Activated CD8-positive, alpha-beta T cell treated with anti-CD3 and anti-CD28 coated beads, Interleukin-2, amount 10 ng/mL, durations not matched to agents 7 days and 5 days (primary cell): ENCODE measurements at regions of chr15 and their contacts with region 1.

Region 1: GRCh38 chr15:90886041-90886614 is 1.8 kb downstream of the FES start:
- DNase-seq: peak; percentile 86
- ATAC-seq: peak; percentile 76
- H3K4me3 Mint-ChIP-seq: peak overlapping the region; percentile 52
- H3K27ac Mint-ChIP-seq: peak overlapping the region; percentile 79
- H3K4me1 Mint-ChIP-seq: peaks cover 42% of the 10 kb centered on the region
- H3K27me3 Mint-ChIP-seq: no peaks in the 10 kb centered on the region

Region 2: DNA sequence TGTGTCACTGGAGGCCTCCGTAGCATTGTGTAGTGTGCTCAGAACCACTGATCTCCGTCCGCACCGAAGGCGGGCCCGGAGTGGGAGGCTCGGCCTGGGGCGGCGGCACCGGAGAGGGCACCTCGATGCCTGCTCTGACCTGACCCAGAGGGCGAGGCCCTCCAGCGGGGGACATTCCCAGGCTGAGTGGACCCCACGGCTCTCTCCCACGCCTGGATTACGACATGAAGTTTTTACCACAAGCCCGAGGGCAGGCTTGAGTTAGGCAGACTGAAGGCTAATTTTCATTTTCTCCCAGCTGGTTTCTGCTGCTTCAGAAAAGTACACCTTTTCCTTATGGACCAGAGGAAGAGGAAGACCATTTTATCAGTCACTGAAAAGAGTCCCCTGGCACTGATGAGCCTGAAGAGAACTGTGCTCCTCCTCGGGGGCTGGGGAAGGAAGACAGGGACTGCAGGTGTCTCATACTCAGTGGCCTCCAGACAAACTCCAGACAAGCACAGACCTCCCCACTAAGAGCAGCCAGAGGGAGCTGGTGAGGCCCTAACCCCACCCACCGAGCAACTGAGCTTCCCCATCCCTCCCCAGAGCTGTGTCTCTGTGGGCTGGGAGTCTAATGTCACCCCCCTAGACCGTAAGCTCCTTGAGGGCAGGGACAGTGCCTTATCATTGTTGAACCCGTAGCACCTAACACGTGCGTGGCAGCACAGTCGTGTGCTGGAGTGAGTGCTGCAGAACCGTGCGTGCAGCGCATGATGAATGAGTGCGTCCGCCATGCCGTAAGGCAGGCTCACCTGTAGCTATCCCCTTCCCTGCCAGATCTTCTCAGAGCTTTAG is 243.4 kb before region 1 on chr15:
- CTCF ChIA-PET with region 1: interaction called, 16 read pairs
- POLR2A ChIA-PET with region 1: interaction called, 3 read pairs
- DNase-seq: peak; percentile 19
- ATAC-seq: no peak
- H3K4me3 Mint-ChIP-seq: no peak overlapping the region
- H3K27ac Mint-ChIP-seq: no peak overlapping the region
- H3K4me1 Mint-ChIP-seq: peaks cover 10% of the 10 kb centered on the region
- H3K27me3 Mint-ChIP-seq: no peaks in the 10 kb centered on the region

Region 3: DNA sequence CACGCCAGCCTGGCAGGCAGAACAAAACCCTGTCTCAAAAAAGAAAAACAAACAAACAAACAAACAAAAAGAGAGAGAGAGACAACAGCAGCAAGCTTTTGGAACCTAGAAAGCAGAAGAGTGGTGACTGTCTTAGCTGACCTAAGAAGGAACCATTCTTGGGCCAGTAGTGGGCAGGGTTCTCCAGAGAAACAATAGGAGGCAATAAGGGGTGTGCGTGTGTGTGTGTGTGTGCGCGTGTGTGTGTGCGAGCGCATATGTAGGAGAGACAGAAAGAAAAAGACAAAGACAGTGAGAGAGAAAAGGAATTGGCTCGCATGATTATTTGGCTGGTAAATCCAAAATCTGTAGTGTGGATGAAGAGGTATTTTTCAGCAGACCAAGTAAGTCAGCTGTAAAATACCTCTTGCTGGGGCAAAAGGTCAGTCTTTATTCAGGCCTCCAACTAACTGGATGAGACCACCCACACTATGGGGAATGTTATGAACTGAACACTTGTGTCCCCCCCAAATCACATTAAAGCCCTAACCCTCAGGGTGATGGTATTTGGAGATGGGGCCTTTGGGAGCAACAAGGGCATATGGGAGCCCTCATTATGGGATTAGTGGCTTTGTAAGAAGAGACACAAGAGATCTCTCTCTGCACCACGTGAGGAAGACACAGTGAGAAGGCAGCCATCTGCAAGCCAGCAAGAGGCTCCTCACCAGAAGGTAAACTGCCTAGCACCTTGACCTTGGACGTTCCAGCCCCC is 184.1 kb before region 1 on chr15:
- CTCF ChIA-PET with region 1: interaction called, 16 read pairs
- POLR2A ChIA-PET with region 1: interaction called, 6 read pairs
- DNase-seq: no peak
- ATAC-seq: no peak
- H3K4me3 Mint-ChIP-seq: no peak overlapping the region
- H3K27ac Mint-ChIP-seq: no peak overlapping the region
- H3K4me1 Mint-ChIP-seq: peaks cover 10% of the 10 kb centered on the region
- H3K27me3 Mint-ChIP-seq: no peaks in the 10 kb centered on the region

Region 4: GRCh38 chr15:90780916-90781315 is 105.2 kb before region 1 on chr15:
- CTCF ChIA-PET with region 1: interaction called, 15 read pairs
- POLR2A ChIA-PET with region 1: no interaction called
- DNase-seq: peak; percentile 68
- ATAC-seq: peak; percentile 96
- H3K4me3 Mint-ChIP-seq: peak overlapping the region; percentile 66
- H3K27ac Mint-ChIP-seq: peak overlapping the region; percentile 92
- H3K4me1 Mint-ChIP-seq: peaks cover 37% of the 10 kb centered on the region
- H3K27me3 Mint-ChIP-seq: no peaks in the 10 kb centered on the region

Region 5: GRCh38 chr15:90829942-90830440 is 56.1 kb before region 1 on chr15:
- CTCF ChIA-PET with region 1: interaction called, 14 read pairs
- POLR2A ChIA-PET with region 1: no interaction called
- DNase-seq: peak; percentile 67
- ATAC-seq: peak; percentile 86
- H3K4me3 Mint-ChIP-seq: peak overlapping the region; percentile 62
- H3K27ac Mint-ChIP-seq: peak overlapping the region; percentile 95
- H3K4me1 Mint-ChIP-seq: peaks cover 72% of the 10 kb centered on the region
- H3K27me3 Mint-ChIP-seq: no peaks in the 10 kb centered on the region

Region 6: DNA sequence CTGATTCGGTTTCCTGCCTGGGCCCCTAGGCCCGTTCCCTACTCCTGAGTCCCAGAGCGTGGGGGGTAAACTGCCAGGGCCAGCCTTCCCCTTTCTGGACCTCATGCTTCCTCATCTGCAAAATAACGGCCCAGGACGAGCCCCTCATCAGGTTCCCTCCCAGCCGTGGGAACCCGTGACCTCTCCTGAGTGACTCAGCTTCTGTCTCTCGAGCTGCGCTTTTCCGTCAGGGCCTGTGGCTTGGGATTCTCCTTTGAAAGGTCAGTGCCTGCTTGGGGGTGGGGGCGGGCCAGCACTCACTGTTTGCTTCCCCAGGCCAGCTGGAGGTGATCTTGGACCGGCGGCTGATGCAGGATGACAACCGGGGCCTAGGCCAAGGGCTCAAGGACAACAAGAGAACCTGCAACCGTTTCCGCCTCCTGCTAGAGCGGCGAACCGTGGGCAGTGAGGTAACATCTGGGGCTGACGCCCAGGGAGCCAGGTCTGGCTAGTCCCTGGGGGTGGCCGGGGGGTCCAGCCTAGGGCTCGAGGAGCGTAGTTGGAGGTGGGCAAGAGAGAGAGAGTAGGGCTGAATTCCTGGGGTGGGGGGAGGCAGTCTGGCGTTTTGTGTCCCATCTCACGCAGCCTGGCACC is 29.8 kb after region 1 on chr15:
- CTCF ChIA-PET with region 1: no interaction called
- POLR2A ChIA-PET with region 1: no interaction called
- DNase-seq: no peak
- ATAC-seq: no peak
- H3K4me3 Mint-ChIP-seq: no peak overlapping the region
- H3K27ac Mint-ChIP-seq: no peak overlapping the region
- H3K4me1 Mint-ChIP-seq: no peaks in the 10 kb centered on the region
- H3K27me3 Mint-ChIP-seq: no peaks in the 10 kb centered on the region

Region 7: GRCh38 chr15:90931737-90932659 is 45.9 kb after region 1 on chr15 and contains the start of gene HDDC3:
- CTCF ChIA-PET with region 1: interaction called, 40 read pairs
- POLR2A ChIA-PET with region 1: interaction called, 3 read pairs
- DNase-seq: peak; percentile 94
- ATAC-seq: peak; percentile 59
- H3K4me3 Mint-ChIP-seq: peak within 1 kb of the TSS; percentile 97
- H3K27ac Mint-ChIP-seq: peak within 1 kb of the TSS; percentile 99
- H3K4me1 Mint-ChIP-seq: peaks cover 63% of the 10 kb centered on the region
- H3K27me3 Mint-ChIP-seq: no peaks in the 10 kb centered on the region
- total RNA-seq, gene HDDC3: 23.8 to 26.9 TPM

Region 8: DNA sequence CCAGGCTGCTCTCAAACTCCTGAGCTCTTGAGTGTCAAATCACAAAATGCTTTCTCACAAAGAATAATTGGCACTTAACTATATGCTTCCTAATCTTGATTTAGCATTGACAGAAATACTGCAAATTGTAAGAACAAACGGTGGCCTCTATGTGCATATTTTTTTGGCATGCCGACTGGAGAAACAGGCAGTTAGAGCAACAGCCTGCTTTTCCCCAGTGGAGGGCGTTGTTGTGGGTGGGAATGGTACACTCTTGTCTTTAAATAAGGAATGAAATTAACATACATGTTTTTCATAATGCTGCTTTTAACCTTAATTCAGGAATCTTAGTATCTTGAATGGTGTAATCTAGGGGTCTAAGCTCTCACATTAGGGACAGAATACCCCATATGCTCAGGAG is 182.8 kb after region 1 on chr15:
- CTCF ChIA-PET with region 1: no interaction called
- POLR2A ChIA-PET with region 1: no interaction called
- DNase-seq: no peak
- ATAC-seq: no peak
- H3K4me3 Mint-ChIP-seq: no peak overlapping the region
- H3K27ac Mint-ChIP-seq: no peak overlapping the region
- H3K4me1 Mint-ChIP-seq: no peaks in the 10 kb centered on the region
- H3K27me3 Mint-ChIP-seq: peaks cover 32% of the 10 kb centered on the region

Region 9: GRCh38 chr15:91150502-91151160 is 264.5 kb after region 1 on chr15:
- CTCF ChIA-PET with region 1: no interaction called
- POLR2A ChIA-PET with region 1: no interaction called
- DNase-seq: no peak
- ATAC-seq: no peak
- H3K4me3 Mint-ChIP-seq: no peak overlapping the region
- H3K27ac Mint-ChIP-seq: no peak overlapping the region
- H3K4me1 Mint-ChIP-seq: no peaks in the 10 kb centered on the region
- H3K27me3 Mint-ChIP-seq: peaks cover 25% of the 10 kb centered on the region

Region 10: GRCh38 chr15:91357011-91357410 is 470.9 kb after region 1 on chr15:
- CTCF ChIA-PET with region 1: no interaction called
- POLR2A ChIA-PET with region 1: no interaction called
- DNase-seq: no peak
- ATAC-seq: no peak
- H3K4me3 Mint-ChIP-seq: no peak overlapping the region
- H3K27ac Mint-ChIP-seq: no peak overlapping the region
- H3K4me1 Mint-ChIP-seq: peaks cover 9% of the 10 kb centered on the region
- H3K27me3 Mint-ChIP-seq: peaks cover 31% of the 10 kb centered on the region